Activated CD4-positive, alpha-beta T cell treated with anti-CD3 and anti-CD28 coated beads, Interleukin-2, amount 10 ng/mL, durations not matched to agents 7 days and 5 days (primary cell): ENCODE measurements at regions of chr19 and their contacts with region 1.

Region 1: DNA sequence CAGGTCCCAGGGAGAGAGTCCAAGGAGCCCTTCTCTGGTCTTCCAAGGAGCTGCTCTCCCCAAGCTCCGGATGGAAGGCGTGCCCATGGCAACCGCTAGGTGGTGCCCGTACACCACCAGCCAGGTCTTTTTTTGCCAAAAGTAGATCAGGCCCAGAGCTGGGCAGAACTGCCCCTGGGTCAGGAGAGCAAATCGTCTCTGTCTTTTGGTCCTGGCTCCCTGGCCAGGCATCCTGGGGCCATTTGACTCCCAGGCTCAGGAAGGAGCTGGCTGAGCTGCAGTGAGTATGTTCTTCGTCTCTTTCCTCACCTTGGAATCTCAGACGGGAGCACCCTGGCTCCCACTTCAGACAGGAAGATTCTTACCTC is 24.6 kb upstream of the BCL3 start:
- DNase-seq: peak; percentile 80
- H3K4me3 Mint-ChIP-seq: no peak overlapping the region
- H3K27ac Mint-ChIP-seq: peak overlapping the region; percentile 55
- H3K4me1 Mint-ChIP-seq: peaks cover 45% of the 10 kb centered on the region
- H3K27me3 Mint-ChIP-seq: no peaks in the 10 kb centered on the region

Region 2: DNA sequence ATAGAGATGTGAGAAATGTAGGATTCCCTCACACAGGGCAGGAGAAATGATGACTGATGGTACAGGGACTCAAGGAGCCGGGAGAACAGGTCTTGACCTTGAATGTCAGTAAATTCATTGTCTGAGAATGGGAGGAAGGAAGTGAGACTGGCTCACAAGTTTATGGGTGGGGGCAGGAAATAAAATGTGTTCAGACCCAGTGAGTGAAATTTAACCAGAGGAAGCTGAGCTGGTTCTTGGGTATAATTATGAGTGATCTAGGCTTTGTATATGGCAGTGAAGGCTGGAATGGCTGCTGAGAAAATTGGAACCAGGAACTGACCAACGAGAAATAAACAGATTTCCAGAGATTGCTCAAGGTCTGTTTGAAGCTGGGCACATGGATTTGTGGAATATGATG is 116.9 kb before region 1 on chr19:
- CTCF ChIA-PET with region 1: no interaction called
- POLR2A ChIA-PET with region 1: no interaction called
- DNase-seq: no peak
- H3K4me3 Mint-ChIP-seq: no peak overlapping the region
- H3K27ac Mint-ChIP-seq: no peak overlapping the region
- H3K4me1 Mint-ChIP-seq: peaks cover 13% of the 10 kb centered on the region
- H3K27me3 Mint-ChIP-seq: peaks cover 2% of the 10 kb centered on the region

Region 3: DNA sequence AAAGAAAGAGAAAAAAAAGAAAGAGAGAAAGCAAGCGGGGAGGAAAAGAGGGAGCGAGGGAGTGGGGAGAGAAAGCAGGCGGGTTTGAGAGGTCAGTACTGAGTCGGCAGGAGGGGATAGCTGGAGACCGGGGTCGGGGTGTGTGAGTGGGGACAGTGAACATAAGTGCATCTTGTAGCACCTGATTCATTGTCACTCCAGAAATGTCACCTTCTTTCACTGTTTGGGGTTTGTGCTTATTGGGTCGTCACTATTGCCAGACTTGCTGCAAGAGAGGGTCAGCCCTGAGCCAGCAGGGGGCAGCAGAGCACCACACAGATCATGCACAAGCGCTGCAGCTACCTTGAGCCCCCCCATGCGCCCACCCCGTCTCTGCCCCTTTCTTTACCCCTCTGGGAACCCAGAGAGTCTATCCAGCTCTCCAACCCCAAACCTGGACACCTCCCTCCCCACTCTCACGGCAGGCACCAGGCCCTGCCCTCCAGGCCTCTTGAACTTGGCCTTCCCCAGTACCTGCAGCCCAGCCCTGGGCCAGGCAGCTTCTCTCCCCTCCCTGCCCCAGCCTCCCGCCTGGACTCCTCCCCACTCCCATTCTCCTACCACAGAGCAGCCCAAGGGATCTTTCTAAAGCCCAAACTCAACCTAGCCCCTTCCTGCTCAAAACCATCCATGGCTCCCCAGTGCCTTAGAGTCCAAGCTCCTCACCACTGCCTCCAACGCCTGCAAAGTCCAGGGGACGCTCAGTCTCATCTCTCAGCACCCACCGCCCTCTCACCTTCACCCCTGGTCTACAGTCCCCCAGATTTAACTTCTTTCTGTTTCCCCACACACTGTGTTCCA is 34.7 kb before region 1 on chr19:
- CTCF ChIA-PET with region 1: interaction called, 25 read pairs
- POLR2A ChIA-PET with region 1: no interaction called
- DNase-seq: peak; percentile 80
- H3K4me3 Mint-ChIP-seq: no peak overlapping the region
- H3K27ac Mint-ChIP-seq: peak overlapping the region; percentile 17
- H3K4me1 Mint-ChIP-seq: peaks cover 36% of the 10 kb centered on the region
- H3K27me3 Mint-ChIP-seq: peaks cover 13% of the 10 kb centered on the region

Region 4: GRCh38 chr19:44712864-44713515 is 10.9 kb before region 1 on chr19:
- CTCF ChIA-PET with region 1: interaction called, 24 read pairs
- POLR2A ChIA-PET with region 1: no interaction called
- DNase-seq: no peak
- H3K4me3 Mint-ChIP-seq: no peak overlapping the region
- H3K27ac Mint-ChIP-seq: no peak overlapping the region
- H3K4me1 Mint-ChIP-seq: no peaks in the 10 kb centered on the region
- H3K27me3 Mint-ChIP-seq: peaks cover 3% of the 10 kb centered on the region

Region 5: GRCh38 chr19:44752816-44753618 is 29.1 kb after region 1 on chr19:
- CTCF ChIA-PET with region 1: interaction called, 20 read pairs
- POLR2A ChIA-PET with region 1: interaction called, 3 read pairs
- DNase-seq: peak; percentile 96
- H3K4me3 Mint-ChIP-seq: peak overlapping the region; percentile 91
- H3K27ac Mint-ChIP-seq: peak overlapping the region; percentile 91
- H3K4me1 Mint-ChIP-seq: peaks cover 75% of the 10 kb centered on the region
- H3K27me3 Mint-ChIP-seq: no peaks in the 10 kb centered on the region

Region 6: GRCh38 chr19:44782729-44783128 is 58.8 kb after region 1 on chr19:
- CTCF ChIA-PET with region 1: interaction called, 11 read pairs
- POLR2A ChIA-PET with region 1: no interaction called
- DNase-seq: no peak
- H3K4me3 Mint-ChIP-seq: no peak overlapping the region
- H3K27ac Mint-ChIP-seq: no peak overlapping the region
- H3K4me1 Mint-ChIP-seq: peaks cover 5% of the 10 kb centered on the region
- H3K27me3 Mint-ChIP-seq: no peaks in the 10 kb centered on the region